ENCODE measurements at regions of chr15 and their contacts with region 1.

Region 1: GRCh38 chr15:40301467-40302179 is 6.1 kb downstream of the PLCB2 start:
- DNase-seq: peak; percentile 80
- H3K4me3 ChIP-seq: no peak overlapping the region; a peak in 1 of 4 replicates
- H3K27ac ChIP-seq: peak overlapping the region in 1 of 2 experiments; percentile 89; a peak in 2 of 4 replicates
- H3K4me1 ChIP-seq: peaks cover 0 to 26% of the 10 kb centered on the region in 2 experiments; a peak in 2 of 4 replicates
- H3K27me3 ChIP-seq: no peaks in the 10 kb centered on the region; the same call in 1 of the 2 replicates
- CTCF ChIP-seq: no peak
- EP300 ChIP-seq: no peak
- RAD21 ChIP-seq: no peak

Region 2: GRCh38 chr15:40053831-40054604 is 247.6 kb before region 1 on chr15:
- CTCF ChIA-PET with region 1: no interaction called
- POLR2A ChIA-PET with region 1: no interaction called
- DNase-seq: no peak
- H3K4me3 ChIP-seq: no peak overlapping the region
- H3K27ac ChIP-seq: no peak overlapping the region
- H3K4me1 ChIP-seq: peaks cover 0 to 25% of the 10 kb centered on the region in 2 experiments; a peak in 1 of 4 replicates
- H3K27me3 ChIP-seq: no peaks in the 10 kb centered on the region
- CTCF ChIP-seq: no peak
- EP300 ChIP-seq: no peak
- RAD21 ChIP-seq: no peak

Region 3: DNA sequence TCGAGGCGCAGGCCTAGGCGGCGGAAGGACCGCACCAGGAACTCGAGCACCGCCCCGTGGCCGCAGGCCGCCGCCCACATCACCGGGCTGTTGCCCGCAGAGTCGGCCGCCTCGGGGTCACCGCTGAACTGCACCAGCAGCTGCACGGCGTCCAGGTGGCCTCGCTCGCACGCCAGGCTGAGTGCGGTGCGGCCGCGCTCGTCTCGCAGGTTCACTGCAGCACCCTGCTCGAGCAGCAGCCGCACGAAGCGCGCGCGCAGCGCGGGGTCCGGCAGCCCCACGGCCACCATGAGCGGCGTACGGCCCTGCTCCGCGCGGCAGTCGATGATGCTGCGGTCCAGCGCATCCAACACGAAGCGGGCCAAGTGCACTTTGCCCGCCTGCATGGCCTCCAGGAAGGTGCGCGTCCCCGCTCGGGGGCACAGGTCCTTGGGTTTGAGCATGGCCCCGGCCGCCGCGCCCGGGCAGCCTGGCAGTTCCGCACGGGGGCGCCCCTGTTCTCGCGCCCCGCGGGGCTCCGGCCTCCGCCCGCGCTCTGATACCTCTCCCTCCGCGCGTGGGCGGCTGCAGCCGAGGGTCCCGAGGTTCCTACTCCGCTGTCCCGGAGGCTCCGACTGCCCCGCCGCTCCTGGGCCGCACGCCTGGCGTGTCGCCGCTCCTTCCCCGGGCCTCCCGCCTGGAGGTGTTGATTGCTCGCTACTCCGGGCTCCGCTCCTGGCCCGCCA is 19.3 kb before region 1 on chr15:
- CTCF ChIA-PET with region 1: interaction called, 2,194 read pairs
- POLR2A ChIA-PET with region 1: interaction called, 5 read pairs
- DNase-seq: peak; percentile 86
- H3K4me3 ChIP-seq: peak overlapping the region; percentile 46; a peak in 3 of 4 replicates
- H3K27ac ChIP-seq: no peak overlapping the region
- H3K4me1 ChIP-seq: peaks cover 10 to 22% of the 10 kb centered on the region in 2 experiments; a peak in 3 of 4 replicates
- H3K27me3 ChIP-seq: peaks cover 18% of the 10 kb centered on the region
- CTCF ChIP-seq: peak; percentile 48
- EP300 ChIP-seq: no peak
- RAD21 ChIP-seq: no peak; the same call in 1 of the 2 replicates

Region 4: GRCh38 chr15:40290918-40291574 is 10.6 kb before region 1 on chr15:
- CTCF ChIA-PET with region 1: interaction called, 2,194 read pairs
- POLR2A ChIA-PET with region 1: interaction called, 6 read pairs
- DNase-seq: peak; percentile 81
- H3K4me3 ChIP-seq: peak overlapping the region in 1 of 2 experiments; percentile 28; a peak in 1 of 4 replicates
- H3K27ac ChIP-seq: no peak overlapping the region
- H3K4me1 ChIP-seq: peaks cover 0 to 20% of the 10 kb centered on the region in 2 experiments; a peak in 2 of 4 replicates
- H3K27me3 ChIP-seq: peaks cover 5% of the 10 kb centered on the region; the same call in 1 of the 2 replicates
- CTCF ChIP-seq: no peak
- EP300 ChIP-seq: no peak
- RAD21 ChIP-seq: no peak